ENCODE measurements at regions of chr15 and their contacts with region 1.

Region 1: DNA sequence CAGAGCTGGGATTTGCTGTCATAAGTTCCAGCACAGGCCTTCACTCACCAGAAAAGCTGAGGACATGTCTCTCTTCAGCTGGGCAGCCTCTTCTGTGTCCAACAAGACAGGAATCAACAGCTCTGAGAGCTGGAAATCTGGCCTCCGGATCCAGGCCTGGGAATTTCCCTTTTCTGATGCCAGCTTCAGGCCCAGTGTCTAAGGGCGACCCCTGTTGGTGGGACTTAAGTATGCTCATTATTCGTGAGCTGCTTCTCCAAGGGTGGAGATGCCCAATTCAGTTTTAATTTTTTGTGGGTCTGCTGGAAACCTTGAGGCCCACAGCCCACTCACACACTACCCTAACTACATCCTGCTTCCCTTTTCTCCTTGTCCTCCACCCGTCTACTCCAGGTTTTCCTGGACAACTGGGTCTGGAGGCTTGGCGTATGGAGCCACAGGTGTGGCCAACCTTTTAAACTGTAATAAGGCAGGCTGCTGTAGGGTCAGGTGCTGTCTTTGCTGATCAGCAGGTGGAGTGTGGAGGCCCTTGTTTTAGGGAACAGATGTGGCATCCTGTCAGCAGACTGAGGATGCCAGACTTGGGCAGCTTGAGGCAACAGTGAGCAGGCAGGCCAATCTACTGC is 2.6 kb upstream of the CEMIP start:
- DNase-seq: peak; percentile 78
- ATAC-seq: no peak
- H3K4me3 Mint-ChIP-seq: no peak overlapping the region
- H3K27ac Mint-ChIP-seq: no peak overlapping the region
- H3K4me1 Mint-ChIP-seq: peaks cover 6% of the 10 kb centered on the region
- H3K27me3 Mint-ChIP-seq: peaks cover 39% of the 10 kb centered on the region
- CTCF ChIP-seq: peak; percentile 85

Region 2: DNA sequence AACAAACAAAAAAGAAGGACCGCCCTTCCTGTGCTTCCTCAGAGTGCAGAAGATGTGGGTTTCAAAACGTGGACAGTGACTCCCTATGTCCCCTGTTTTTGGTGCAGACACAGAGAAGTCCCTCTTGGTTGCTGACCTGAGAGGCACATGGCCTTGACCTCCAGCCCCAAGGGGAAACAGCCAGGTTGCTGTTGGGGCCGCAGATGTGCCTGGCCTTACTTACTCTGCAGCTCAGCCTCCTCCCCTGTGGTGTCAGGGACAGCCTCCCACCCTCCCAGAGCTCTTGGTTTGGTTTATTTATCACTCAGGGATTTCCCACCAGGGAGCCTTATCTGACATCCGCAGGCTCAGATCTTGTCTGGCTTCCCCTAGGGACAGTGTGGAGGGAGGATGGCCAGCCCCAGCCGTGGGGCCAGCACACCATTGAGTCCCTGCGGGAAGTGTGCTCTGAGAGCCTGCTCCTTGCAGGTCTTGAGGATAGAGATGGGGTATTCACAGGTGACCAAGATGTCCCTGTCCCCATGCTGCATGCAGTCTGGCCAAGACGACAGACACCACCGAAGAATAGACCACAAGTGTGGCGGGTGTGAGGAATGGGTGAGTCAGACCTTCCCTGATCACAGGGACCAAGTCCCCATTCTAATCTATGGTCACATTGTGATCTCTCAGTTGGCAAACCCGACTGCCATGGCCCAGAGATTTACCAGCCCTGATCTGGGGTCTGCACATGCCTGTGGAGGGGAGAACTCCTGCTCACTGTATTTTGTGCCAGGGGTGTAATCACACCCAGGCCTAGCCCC is 215.7 kb before region 1 on chr15:
- CTCF ChIA-PET with region 1: no interaction called
- POLR2A ChIA-PET with region 1: no interaction called
- intact Hi-C with region 1: loop called (anchors 5 kb)
- DNase-seq: no peak
- ATAC-seq: no peak
- H3K4me3 Mint-ChIP-seq: no peak overlapping the region
- H3K27ac Mint-ChIP-seq: no peak overlapping the region
- H3K4me1 Mint-ChIP-seq: peaks cover 3% of the 10 kb centered on the region
- H3K27me3 Mint-ChIP-seq: peaks cover 11% of the 10 kb centered on the region
- CTCF ChIP-seq: no peak

Region 3: GRCh38 chr15:80580106-80580505 is 196.4 kb before region 1 on chr15:
- CTCF ChIA-PET with region 1: interaction called, 11 read pairs
- POLR2A ChIA-PET with region 1: no interaction called
- intact Hi-C with region 1: no loop called
- DNase-seq: peak; percentile 13
- ATAC-seq: peak; percentile 67
- H3K4me3 Mint-ChIP-seq: no peak overlapping the region
- H3K27ac Mint-ChIP-seq: no peak overlapping the region
- H3K4me1 Mint-ChIP-seq: peaks cover 2% of the 10 kb centered on the region
- H3K27me3 Mint-ChIP-seq: peaks cover 3% of the 10 kb centered on the region
- CTCF ChIP-seq: no peak

Region 4: GRCh38 chr15:80721476-80721875 is 55.1 kb before region 1 on chr15:
- CTCF ChIA-PET with region 1: no interaction called
- POLR2A ChIA-PET with region 1: no interaction called
- intact Hi-C with region 1: no loop called
- DNase-seq: no peak
- ATAC-seq: no peak
- H3K4me3 Mint-ChIP-seq: no peak overlapping the region
- H3K27ac Mint-ChIP-seq: no peak overlapping the region
- H3K4me1 Mint-ChIP-seq: peaks cover 3% of the 10 kb centered on the region
- H3K27me3 Mint-ChIP-seq: no peaks in the 10 kb centered on the region
- CTCF ChIP-seq: no peak

Region 5: DNA sequence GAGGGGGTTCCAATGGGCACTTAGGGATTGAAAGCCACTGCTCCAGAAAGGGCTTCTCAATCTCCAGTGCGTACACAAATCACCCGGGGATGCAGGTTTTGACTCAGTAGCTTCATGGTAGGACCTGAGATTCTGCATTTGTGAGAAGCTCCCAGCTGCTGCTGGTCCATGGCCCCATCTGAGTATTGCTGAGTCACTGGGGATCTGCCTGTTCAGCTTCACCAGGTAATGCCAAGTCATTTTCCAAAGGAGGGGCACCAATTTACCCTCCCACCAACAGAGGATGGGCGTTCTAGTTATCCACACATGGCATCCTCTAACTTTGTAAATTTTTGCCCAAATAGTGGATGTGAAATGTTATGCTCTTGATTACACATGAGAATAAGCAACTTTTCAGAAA is 10.3 kb before region 1 on chr15:
- CTCF ChIA-PET with region 1: interaction called, 16 read pairs
- POLR2A ChIA-PET with region 1: no interaction called
- intact Hi-C with region 1: no loop called
- DNase-seq: no peak
- ATAC-seq: no peak
- H3K4me3 Mint-ChIP-seq: no peak overlapping the region
- H3K27ac Mint-ChIP-seq: no peak overlapping the region
- H3K4me1 Mint-ChIP-seq: peaks cover 3% of the 10 kb centered on the region
- H3K27me3 Mint-ChIP-seq: peaks cover 3% of the 10 kb centered on the region
- CTCF ChIP-seq: no peak

Region 6: DNA sequence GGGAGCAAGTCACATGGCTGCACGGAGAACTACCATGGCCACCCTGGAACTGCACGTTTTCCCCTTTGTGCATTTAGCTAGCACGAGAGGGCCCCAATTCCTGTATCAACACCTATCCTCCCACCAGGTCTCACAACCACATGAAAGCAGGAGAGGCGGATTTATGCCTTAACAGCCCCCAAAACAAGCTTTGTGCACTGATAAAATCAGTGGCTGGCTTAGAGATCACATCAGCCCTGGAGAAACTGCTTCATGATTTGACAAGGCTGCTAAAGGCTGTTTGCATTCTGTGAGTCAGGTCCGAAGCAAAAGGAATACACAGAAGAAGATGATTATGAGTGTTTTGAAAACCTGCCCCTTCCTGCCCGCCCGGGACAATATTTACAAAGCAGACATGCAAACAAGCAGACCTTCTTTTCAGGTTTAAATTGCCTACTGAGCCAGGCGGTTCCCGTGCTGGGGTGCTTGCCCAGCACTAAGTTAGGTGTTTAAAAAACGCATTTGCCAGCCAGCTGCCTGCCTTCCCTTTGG is 28.5 kb after region 1 on chr15:
- CTCF ChIA-PET with region 1: interaction called, 16 read pairs
- POLR2A ChIA-PET with region 1: interaction called, 5 read pairs
- intact Hi-C with region 1: no loop called
- DNase-seq: peak; percentile 49
- ATAC-seq: peak; percentile 48
- H3K4me3 Mint-ChIP-seq: no peak overlapping the region
- H3K27ac Mint-ChIP-seq: peak overlapping the region; percentile 4
- H3K4me1 Mint-ChIP-seq: peaks cover 25% of the 10 kb centered on the region
- H3K27me3 Mint-ChIP-seq: no peaks in the 10 kb centered on the region
- CTCF ChIP-seq: no peak